MCF 10A (cell line): ENCODE measurements at regions of chr22 and their contacts with region 1.

Region 1: GRCh38 chr22:37457093-37457893 is 28.9 kb downstream of the MFNG start:
- DNase-seq: peak; percentile 79
- H3K4me3 Mint-ChIP-seq: no peak overlapping the region
- H3K27ac Mint-ChIP-seq: no peak overlapping the region
- H3K4me1 Mint-ChIP-seq: peaks cover 20% of the 10 kb centered on the region
- H3K27me3 Mint-ChIP-seq: no peaks in the 10 kb centered on the region
- CTCF ChIP-seq: peak; percentile 98

Region 2: DNA sequence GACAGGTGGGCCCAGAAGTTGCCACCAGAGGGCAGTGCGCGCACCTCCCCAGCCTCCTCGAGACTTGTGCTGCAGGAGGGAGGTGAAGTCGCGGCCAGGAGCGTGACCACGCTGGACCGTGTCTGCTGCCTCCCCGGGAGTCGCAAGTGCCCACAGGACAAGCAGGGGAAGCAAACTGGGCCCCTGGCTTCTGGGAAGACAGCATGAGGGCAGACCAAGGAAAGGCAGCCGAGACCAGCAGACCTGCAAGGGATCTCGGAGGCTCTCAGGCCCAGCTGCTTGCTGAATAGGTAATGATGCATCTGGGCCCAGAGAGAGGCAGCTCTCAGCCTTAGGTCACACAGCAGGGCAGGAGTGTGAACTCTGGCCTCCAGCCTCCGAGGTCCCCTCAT is 290.6 kb before region 1 on chr22:
- CTCF ChIA-PET with region 1: no interaction called
- POLR2A ChIA-PET with region 1: no interaction called
- intact Hi-C with region 1: loop called (anchors 1 kb)
- DNase-seq: peak; percentile 75
- H3K4me3 Mint-ChIP-seq: no peak overlapping the region
- H3K27ac Mint-ChIP-seq: no peak overlapping the region
- H3K4me1 Mint-ChIP-seq: peaks cover 6% of the 10 kb centered on the region
- H3K27me3 Mint-ChIP-seq: peaks cover 22% of the 10 kb centered on the region
- CTCF ChIP-seq: peak; percentile 75

Region 3: GRCh38 chr22:37260901-37261336 is 196.4 kb before region 1 on chr22:
- CTCF ChIA-PET with region 1: interaction called, 13 read pairs
- POLR2A ChIA-PET with region 1: interaction called, 3 read pairs
- intact Hi-C with region 1: loop called (anchors 2 kb)
- DNase-seq: peak; percentile 68
- H3K4me3 Mint-ChIP-seq: no peak overlapping the region
- H3K27ac Mint-ChIP-seq: no peak overlapping the region
- H3K4me1 Mint-ChIP-seq: peaks cover 11% of the 10 kb centered on the region
- H3K27me3 Mint-ChIP-seq: no peaks in the 10 kb centered on the region
- CTCF ChIP-seq: peak; percentile 79

Region 4: DNA sequence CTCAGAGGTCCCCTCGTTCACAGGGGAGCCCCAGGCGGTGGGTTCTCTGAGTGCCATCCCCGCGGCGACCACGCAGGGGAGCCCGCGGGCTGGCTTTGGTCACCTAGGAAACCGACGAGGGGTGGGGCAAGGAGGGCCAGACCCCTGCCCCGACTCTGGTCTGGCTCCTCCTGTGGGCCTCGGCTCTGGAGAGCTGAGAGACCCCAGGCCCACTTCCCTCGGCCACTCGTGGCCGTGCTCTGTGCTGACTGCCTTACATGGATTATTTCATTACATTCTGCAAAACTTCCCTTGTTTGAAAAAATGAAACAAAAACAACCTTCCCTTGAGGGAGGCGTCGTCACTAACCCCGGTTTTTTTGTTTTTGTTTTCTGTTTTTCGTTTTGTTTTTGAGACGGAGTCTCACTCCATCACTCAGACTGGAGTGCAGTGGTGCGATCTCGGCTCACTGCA is 190.1 kb before region 1 on chr22:
- CTCF ChIA-PET with region 1: interaction called, 13 read pairs
- POLR2A ChIA-PET with region 1: interaction called, 3 read pairs
- intact Hi-C with region 1: loop called (anchors 1 kb)
- DNase-seq: peak; percentile 42
- H3K4me3 Mint-ChIP-seq: peak overlapping the region; percentile 55
- H3K27ac Mint-ChIP-seq: no peak overlapping the region
- H3K4me1 Mint-ChIP-seq: no peaks in the 10 kb centered on the region
- H3K27me3 Mint-ChIP-seq: no peaks in the 10 kb centered on the region
- CTCF ChIP-seq: peak; percentile 95

Region 5: GRCh38 chr22:37273126-37273845 is 184.0 kb before region 1 on chr22:
- CTCF ChIA-PET with region 1: interaction called, 13 read pairs
- POLR2A ChIA-PET with region 1: no interaction called
- intact Hi-C with region 1: loop called (anchors 1 kb)
- DNase-seq: peak; percentile 35
- H3K4me3 Mint-ChIP-seq: no peak overlapping the region
- H3K27ac Mint-ChIP-seq: no peak overlapping the region
- H3K4me1 Mint-ChIP-seq: no peaks in the 10 kb centered on the region
- H3K27me3 Mint-ChIP-seq: no peaks in the 10 kb centered on the region
- CTCF ChIP-seq: no peak

Region 6: GRCh38 chr22:37316875-37317371 is 140.4 kb before region 1 on chr22:
- CTCF ChIA-PET with region 1: interaction called, 195 read pairs
- POLR2A ChIA-PET with region 1: interaction called, 10 read pairs
- intact Hi-C with region 1: loop called (anchors 1 kb)
- DNase-seq: peak; percentile 94
- H3K4me3 Mint-ChIP-seq: no peak overlapping the region
- H3K27ac Mint-ChIP-seq: no peak overlapping the region
- H3K4me1 Mint-ChIP-seq: peaks cover 37% of the 10 kb centered on the region
- H3K27me3 Mint-ChIP-seq: no peaks in the 10 kb centered on the region
- CTCF ChIP-seq: peak; percentile 95

Region 7: DNA sequence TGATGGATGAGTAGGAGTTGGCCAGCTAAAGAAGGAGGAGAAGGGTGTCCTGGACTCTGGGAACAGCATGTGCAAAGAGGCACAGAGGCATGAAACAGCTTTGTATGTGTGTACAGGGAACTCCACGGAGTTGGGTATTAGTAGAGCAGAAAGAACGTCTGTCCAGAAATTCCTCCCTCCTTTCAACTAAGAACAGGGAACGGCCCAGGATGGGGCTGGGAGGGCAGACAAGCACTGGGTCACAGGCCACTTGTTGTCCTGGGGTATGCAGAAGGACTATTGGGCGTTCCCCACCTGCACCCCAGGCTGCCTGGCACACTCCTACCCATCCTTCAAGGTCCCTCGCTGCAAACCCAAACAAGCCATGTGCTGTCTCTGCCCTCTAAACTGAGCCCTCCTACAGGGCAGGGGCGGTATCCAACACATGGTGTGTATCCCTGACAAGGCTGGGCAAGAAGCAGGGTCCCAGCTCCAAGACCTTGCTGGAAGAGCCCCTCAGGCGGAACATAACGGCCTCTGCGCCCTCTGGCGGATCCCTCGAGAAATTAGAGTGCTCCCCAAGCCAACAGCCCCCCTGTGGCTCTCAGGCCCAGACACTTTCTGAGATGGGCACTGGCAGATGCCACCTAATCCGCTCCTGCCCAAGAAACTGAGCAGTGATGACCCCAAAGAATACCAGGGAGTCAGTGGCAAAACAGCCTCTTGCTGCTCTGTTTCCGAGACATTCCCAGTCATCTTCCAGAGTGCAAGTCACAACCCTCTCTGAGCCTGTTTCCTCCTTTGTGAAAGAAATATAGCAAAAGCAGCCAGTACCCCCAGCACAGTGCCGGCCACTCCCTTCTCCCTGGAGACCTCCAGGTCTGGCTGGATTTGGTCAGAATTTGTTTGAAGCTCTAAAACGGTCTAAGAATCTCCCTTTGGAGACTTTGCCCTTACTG is 28.4 kb before region 1 on chr22:
- CTCF ChIA-PET with region 1: interaction called, 14 read pairs
- POLR2A ChIA-PET with region 1: interaction called, 6 read pairs
- intact Hi-C with region 1: no loop called
- DNase-seq: peak; percentile 59
- H3K4me3 Mint-ChIP-seq: peak overlapping the region; percentile 46
- H3K27ac Mint-ChIP-seq: no peak overlapping the region
- H3K4me1 Mint-ChIP-seq: peaks cover 34% of the 10 kb centered on the region
- H3K27me3 Mint-ChIP-seq: no peaks in the 10 kb centered on the region
- CTCF ChIP-seq: peak; percentile 43